HepG2 (cell line): ENCODE measurements at regions of chr5 and their contacts with region 1.

Region 1: GRCh38 chr5:136042665-136043121 is 13.9 kb downstream of the TGFBI start:
- DNase-seq: peak; percentile 29
- ATAC-seq: peak; percentile 43
- H3K4me3 ChIP-seq: no peak overlapping the region
- H3K27ac ChIP-seq: no peak overlapping the region
- H3K4me1 ChIP-seq: peaks cover 19% of the 10 kb centered on the region
- H3K27me3 ChIP-seq: no peaks in the 10 kb centered on the region
- CTCF ChIP-seq: no peak
- EP300 ChIP-seq: no peak
- POLR2A ChIP-seq: no peak
- RAD21 ChIP-seq: no peak

Region 2: DNA sequence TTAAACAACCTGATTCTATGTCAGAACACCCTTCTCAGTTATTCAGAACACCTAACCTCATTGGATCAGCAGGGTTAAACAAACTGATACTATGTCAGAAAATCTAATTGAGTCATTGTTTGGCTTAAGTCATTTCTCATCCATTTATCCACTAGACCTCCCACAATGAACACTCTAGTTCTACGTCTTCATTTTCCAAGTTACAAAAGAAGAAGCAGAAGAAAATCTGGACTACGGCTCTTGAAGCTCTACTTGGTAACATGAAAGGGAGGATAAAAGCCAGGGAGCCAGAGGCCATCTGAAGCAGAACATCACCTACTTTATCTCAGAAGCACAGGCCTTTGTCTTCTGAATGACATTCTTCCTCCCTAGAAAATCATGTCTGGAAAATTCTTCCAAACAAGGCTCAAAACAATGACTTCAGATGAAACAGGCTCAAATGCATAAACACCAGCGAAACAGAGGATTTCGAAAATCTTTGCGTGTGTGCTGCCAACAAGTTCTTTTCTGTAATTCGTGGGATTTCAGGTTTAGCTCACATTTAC is 49.3 kb before region 1 on chr5:
- CTCF ChIA-PET with region 1: no interaction called
- POLR2A ChIA-PET with region 1: no interaction called
- in situ Hi-C with region 1: no loop called
- intact Hi-C with region 1: no loop called
- DNase-seq: no peak
- ATAC-seq: no peak
- H3K4me3 ChIP-seq: no peak overlapping the region
- H3K27ac ChIP-seq: no peak overlapping the region
- H3K4me1 ChIP-seq: peaks cover 23% of the 10 kb centered on the region
- H3K27me3 ChIP-seq: no peaks in the 10 kb centered on the region
- CTCF ChIP-seq: no peak
- EP300 ChIP-seq: no peak
- POLR2A ChIP-seq: no peak
- RAD21 ChIP-seq: no peak

Region 3: GRCh38 chr5:136028782-136029742 is 13.6 kb before region 1 on chr5 and contains the start of gene TGFBI:
- CTCF ChIA-PET with region 1: no interaction called
- POLR2A ChIA-PET with region 1: interaction called, 12 read pairs
- in situ Hi-C with region 1: no loop called
- intact Hi-C with region 1: no loop called
- DNase-seq: peak; percentile 61
- ATAC-seq: peak; percentile 95
- H3K4me3 ChIP-seq: peak within 1 kb of the TSS; percentile 80 to 85 (median 84)
- H3K27ac ChIP-seq: peak within 1 kb of the TSS; percentile 61
- H3K4me1 ChIP-seq: peaks cover 56% of the 10 kb centered on the region
- H3K27me3 ChIP-seq: no peaks in the 10 kb centered on the region; a peak in 2 of 5 replicates
- CTCF ChIP-seq: peak; percentile 70
- EP300 ChIP-seq: no peak
- POLR2A ChIP-seq: peak; percentile 82 to 94
- RAD21 ChIP-seq: peak; percentile 75
- total RNA-seq, gene TGFBI: 138 and 275 TPM in 2 replicates